ENCODE measurements at regions of chr9 and their contacts with region 1.

Region 1: DNA sequence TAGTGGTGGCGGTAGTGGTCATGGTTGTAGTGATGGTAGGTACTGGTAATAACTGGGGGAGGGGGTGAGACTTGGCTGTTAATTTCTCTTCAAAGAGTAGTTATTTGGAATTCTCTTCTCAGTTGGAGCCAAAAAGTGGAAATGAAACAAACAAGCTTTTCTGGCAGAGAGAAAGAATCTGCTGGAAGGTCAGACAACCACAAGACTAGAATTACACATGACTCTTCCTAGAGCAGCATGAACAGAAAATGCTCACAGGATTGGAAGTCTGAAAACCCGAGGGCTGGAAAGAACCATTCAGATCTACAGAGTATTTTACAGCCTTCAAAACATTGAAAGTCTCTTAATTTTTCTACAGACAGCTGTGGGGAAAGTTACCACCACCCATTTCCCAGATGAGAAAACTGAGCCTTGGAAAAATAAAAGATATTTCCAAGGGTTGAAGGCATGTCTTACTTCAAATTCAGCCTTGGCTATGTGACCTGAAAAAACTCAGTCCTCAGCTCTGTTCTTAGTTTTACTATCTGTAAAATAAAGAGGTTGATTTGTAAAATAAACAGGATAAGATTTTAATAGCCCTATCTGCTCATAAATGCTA is 42.9 kb upstream of the TRIM32 start:
- DNase-seq: peak; percentile 69
- H3K4me3 ChIP-seq: no peak overlapping the region
- CTCF ChIP-seq: no peak

Region 2: GRCh38 chr9:116605904-116606341 is 38.3 kb before region 1 on chr9:
- in situ Hi-C with region 1: loop called (anchors 5 kb)
- DNase-seq: no peak
- H3K4me3 ChIP-seq: no peak overlapping the region
- CTCF ChIP-seq: no peak